SK-N-SH (cell line): ENCODE measurements at regions of chr15 and their contacts with region 1.

Region 1: DNA sequence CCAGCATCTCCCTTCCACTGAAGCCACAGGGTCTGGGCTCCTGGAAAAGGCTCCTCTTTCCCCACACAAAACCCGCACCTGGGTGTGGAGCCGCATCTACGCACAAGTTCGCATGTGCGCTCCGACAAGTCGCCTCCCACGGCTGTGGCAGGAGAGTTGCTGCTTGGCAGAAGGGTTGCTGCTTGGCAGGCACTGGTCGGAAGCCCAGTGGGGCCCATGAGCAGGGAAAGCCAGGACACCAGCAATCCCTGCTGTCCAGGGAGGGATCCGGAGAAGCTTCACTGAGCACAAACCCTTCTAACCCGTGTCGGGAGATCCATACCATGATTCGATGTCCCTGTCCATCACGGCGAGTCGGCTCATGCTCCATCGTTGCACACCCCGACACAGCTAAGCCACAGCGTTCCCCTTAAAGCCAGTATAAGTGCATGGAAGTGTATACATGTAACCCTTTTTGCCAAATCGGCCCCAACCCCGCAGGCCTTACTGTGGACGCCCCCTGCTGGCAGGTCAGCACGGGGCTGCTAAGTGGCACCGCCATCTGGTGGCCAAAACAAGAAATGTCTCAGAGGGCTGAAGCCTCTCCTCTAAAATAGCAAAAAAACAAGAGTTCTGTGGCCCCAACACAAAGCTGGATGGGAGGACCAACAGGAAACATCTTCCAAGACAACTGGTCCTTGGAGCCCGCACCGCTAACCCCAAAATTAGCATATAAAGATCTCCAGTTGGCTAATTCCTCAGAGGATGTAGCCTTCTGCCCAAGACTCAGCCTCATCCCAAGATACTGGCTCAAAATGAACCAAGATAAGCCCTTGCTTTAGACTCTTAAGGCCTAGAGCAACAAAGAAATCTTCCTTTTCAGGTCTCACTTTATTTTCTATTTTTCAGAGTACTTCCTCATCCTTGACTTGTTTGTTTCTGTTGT is 8.3 kb downstream of the ANKRD63 start:
- DNase-seq: peak; percentile 88
- H3K4me3 ChIP-seq: peak overlapping the region in 1 of 2 experiments; percentile 30; a peak in 1 of 4 replicates
- H3K27ac ChIP-seq: no peak overlapping the region
- H3K4me1 ChIP-seq: peaks cover under 1 to 5% of the 10 kb centered on the region in 2 experiments; a peak in 1 of 4 replicates
- H3K27me3 ChIP-seq: no peaks in the 10 kb centered on the region
- CTCF ChIP-seq: peak; percentile 100
- EP300 ChIP-seq: no peak
- RAD21 ChIP-seq: peak; percentile 93

Region 2: GRCh38 chr15:40044717-40045571 is 229.7 kb before region 1 on chr15:
- CTCF ChIA-PET with region 1: interaction called, 70 read pairs
- POLR2A ChIA-PET with region 1: no interaction called
- DNase-seq: peak; percentile 92
- H3K4me3 ChIP-seq: peak overlapping the region; percentile 25 to 51; a peak in 3 of 4 replicates
- H3K27ac ChIP-seq: no peak overlapping the region; a peak in 2 of 4 replicates
- H3K4me1 ChIP-seq: peaks cover 23 to 29% of the 10 kb centered on the region in 2 experiments
- H3K27me3 ChIP-seq: no peaks in the 10 kb centered on the region
- CTCF ChIP-seq: peak; percentile 95
- EP300 ChIP-seq: no peak
- RAD21 ChIP-seq: peak; percentile 97

Region 3: GRCh38 chr15:40217159-40217824 is 57.3 kb before region 1 on chr15:
- CTCF ChIA-PET with region 1: interaction called, 868 read pairs
- POLR2A ChIA-PET with region 1: no interaction called
- DNase-seq: peak; percentile 71
- H3K4me3 ChIP-seq: no peak overlapping the region; a peak in 1 of 4 replicates
- H3K27ac ChIP-seq: no peak overlapping the region
- H3K4me1 ChIP-seq: no peaks in the 10 kb centered on the region
- H3K27me3 ChIP-seq: no peaks in the 10 kb centered on the region
- CTCF ChIP-seq: peak; percentile 89
- EP300 ChIP-seq: no peak
- RAD21 ChIP-seq: peak; percentile 95

Region 4: GRCh38 chr15:40323239-40323952 is 48.8 kb after region 1 on chr15 and contains the start of gene INAFM2:
- CTCF ChIA-PET with region 1: interaction called, 818 read pairs
- POLR2A ChIA-PET with region 1: no interaction called
- DNase-seq: peak; percentile 98
- H3K4me3 ChIP-seq: peak within 1 kb of the TSS; percentile 70 to 73
- H3K27ac ChIP-seq: peak within 1 kb of the TSS in 1 of 2 experiments; percentile 43; a peak in 1 of 4 replicates
- H3K4me1 ChIP-seq: peaks cover 20 to 23% of the 10 kb centered on the region in 2 experiments; a peak in 3 of 4 replicates
- H3K27me3 ChIP-seq: no peaks in the 10 kb centered on the region
- CTCF ChIP-seq: peak; percentile 60
- EP300 ChIP-seq: no peak
- RAD21 ChIP-seq: peak; percentile 20
- polyA plus RNA-seq, gene INAFM2: 7.8 and 9.8 TPM in 2 replicates

Region 5: DNA sequence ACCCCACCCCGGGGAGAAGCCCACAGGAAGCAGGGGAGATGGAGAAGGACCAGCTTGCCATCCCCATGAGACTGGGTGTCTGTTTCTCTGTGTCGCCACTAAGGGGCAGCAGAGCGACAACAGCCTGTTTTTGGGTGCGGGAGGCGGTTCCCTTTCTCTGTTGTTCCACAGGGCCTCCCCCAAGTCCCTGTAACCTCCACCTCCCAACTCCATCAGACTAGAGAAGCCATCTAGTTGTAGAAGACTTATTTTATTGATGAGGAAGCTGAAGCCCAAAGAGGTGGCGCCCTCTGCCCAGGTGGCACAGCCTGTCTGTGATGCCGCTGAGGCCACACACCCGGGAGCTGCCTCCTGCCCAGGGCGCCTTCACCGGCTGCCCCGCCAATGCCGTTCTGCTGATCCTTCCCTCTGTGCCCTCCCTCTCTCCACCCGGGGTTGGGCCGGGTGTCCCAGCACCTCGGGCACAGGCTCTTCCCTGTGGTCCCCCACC is 70.1 kb after region 1 on chr15:
- CTCF ChIA-PET with region 1: interaction called, 184 read pairs
- POLR2A ChIA-PET with region 1: no interaction called
- DNase-seq: peak; percentile 87
- H3K4me3 ChIP-seq: no peak overlapping the region; a peak in 1 of 4 replicates
- H3K27ac ChIP-seq: peak overlapping the region in 1 of 2 experiments; percentile 98; a peak in 2 of 4 replicates
- H3K4me1 ChIP-seq: peaks cover 31 to 35% of the 10 kb centered on the region in 2 experiments; a peak in 3 of 4 replicates
- H3K27me3 ChIP-seq: no peaks in the 10 kb centered on the region
- CTCF ChIP-seq: peak; percentile 80
- EP300 ChIP-seq: no peak
- RAD21 ChIP-seq: peak; percentile 83

Region 6: DNA sequence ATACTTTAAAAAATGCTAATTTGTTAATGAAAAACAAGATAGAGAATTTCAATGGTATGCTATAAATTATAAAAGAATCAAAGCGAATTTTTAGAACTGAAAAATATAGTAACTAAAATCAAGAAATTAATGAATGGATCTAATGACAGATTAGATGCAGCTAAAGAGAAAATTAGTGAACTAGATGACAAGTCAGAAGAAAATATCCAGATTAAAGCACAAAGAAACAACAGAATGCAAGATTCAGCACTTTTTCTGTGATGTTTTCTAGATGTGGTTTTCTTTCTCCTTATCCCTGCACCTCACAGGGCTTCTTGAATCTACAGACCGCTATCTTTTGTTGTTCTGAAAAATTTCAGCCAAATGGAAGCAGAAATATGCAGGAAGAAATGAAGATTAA is 787.1 kb after region 1 on chr15:
- CTCF ChIA-PET with region 1: no interaction called
- POLR2A ChIA-PET with region 1: no interaction called
- DNase-seq: no peak
- H3K4me3 ChIP-seq: no peak overlapping the region
- H3K27ac ChIP-seq: no peak overlapping the region
- H3K4me1 ChIP-seq: no peaks in the 10 kb centered on the region
- H3K27me3 ChIP-seq: no peaks in the 10 kb centered on the region
- CTCF ChIP-seq: no peak
- EP300 ChIP-seq: no peak
- RAD21 ChIP-seq: no peak